Pancreas (tissue), 10 donors: ENCODE measurements at regions of chr10 and their contacts with region 1.

Region 1: GRCh38 chr10:122298598-122299301 is 27.7 kb downstream of the BTBD16 start:
- DNase-seq: peak in 5 of 6 donors; percentile 53 to 85 (median 74)
- ATAC-seq: peak; percentile 95 to 98 (median 98)
- H3K4me3 ChIP-seq: peak overlapping the region in 1 of 4 donors; percentile 13
- H3K27ac ChIP-seq: no peak overlapping the region
- H3K4me1 ChIP-seq: peaks cover 0 to 5% (median 0%) of the 10 kb centered on the region in 3 donors
- H3K27me3 ChIP-seq: no peaks in the 10 kb centered on the region
- CTCF ChIP-seq: peak; percentile 81 to 92 (median 84)

Region 2: DNA sequence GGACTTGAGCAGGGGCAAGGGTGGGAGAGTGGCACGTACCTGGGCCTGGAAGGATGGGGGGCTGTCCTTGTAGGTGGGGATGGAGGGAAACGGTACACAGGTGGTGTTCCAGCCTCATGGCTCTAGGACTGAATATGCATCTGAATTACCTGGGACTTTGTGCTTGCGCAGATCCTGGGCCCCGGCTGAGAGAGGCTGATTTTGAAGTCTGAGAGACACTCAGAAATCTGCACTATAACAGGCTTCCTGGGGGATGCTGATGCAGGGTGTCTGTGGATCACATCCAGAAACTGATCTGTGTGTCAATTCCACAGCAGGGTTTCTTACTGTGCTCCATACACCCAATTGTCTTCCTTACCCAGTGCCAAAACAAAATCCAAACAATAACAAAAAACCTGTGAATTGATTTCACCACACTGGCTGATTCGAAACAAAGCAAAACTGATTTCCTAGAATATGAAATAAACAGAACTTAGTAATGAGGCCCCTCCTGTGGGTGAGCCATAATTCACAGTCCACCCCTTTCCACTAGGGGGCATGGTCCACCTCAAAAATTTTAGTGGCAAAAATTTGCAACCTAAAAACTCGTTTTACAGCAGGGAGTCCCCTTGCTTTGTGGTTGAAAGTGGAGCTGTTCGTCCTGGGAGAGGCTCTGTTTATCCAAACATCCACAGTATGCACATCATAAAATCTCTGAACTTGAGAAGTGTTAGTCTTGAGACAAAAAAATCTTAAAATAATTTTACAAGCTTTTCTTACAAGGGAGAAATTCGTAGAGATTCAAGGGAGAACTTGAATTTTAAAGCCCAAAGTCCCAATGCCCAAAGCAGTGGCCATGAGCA is 43.8 kb after region 1 on chr10:
- intact Hi-C with region 1: no loop called
- DNase-seq: peak in 2 of 6 donors; percentile 16 to 53
- ATAC-seq: peak; percentile 58 to 83 (median 75)
- H3K4me3 ChIP-seq: no peak overlapping the region
- H3K27ac ChIP-seq: no peak overlapping the region
- H3K4me1 ChIP-seq: peaks cover 0 to 4% (median 0%) of the 10 kb centered on the region in 3 donors
- H3K27me3 ChIP-seq: no peaks in the 10 kb centered on the region
- CTCF ChIP-seq: peak; percentile 39 to 68 (median 57)

Region 3: GRCh38 chr10:122352817-122353525 is 54.2 kb after region 1 on chr10:
- intact Hi-C with region 1: no loop called
- DNase-seq: no peak
- ATAC-seq: no peak
- H3K4me3 ChIP-seq: no peak overlapping the region
- H3K27ac ChIP-seq: no peak overlapping the region
- H3K4me1 ChIP-seq: no peaks in the 10 kb centered on the region
- H3K27me3 ChIP-seq: no peaks in the 10 kb centered on the region
- CTCF ChIP-seq: no peak

Region 4: DNA sequence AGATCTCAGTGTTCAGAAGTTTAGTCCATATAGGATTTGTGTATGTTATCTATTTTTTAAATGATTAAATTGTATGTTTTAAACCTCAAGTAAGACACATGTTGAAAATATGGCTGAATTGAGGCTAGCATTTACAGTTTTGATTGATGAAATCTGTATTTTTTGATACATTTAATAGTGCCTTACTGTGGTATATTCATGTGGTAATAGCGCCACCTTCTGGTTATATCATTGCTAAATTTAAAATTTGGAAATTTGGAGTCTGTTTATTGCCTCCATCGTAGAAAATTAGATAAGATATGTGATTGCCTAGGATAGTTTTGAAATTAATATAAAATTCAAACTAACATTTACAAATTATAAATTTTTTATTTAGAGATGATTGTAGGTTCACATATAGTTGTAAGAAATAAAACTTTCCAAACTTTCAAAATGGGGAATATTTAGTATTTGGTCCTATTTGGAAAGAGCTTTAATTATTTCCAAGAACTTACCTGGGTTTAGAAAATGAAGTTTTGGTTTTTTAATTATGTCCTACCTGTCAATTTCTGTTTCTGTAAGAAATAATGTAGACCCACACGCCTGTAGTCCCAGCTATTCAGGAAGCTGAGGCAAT is 136.6 kb after region 1 on chr10:
- intact Hi-C with region 1: loop called in 2 of 3 experiments (anchors 2 to 5 kb)
- DNase-seq: no peak
- ATAC-seq: peak; percentile 40 to 71 (median 66)
- H3K4me3 ChIP-seq: no peak overlapping the region
- H3K27ac ChIP-seq: no peak overlapping the region
- H3K4me1 ChIP-seq: no peaks in the 10 kb centered on the region
- H3K27me3 ChIP-seq: no peaks in the 10 kb centered on the region
- CTCF ChIP-seq: peak; percentile 14 to 51 (median 45)

Region 5: GRCh38 chr10:122565728-122566206 is 267.0 kb after region 1 on chr10:
- intact Hi-C with region 1: loop called in 1 of 3 experiments (anchors 10 kb)
- DNase-seq: peak; percentile 56 to 92 (median 80)
- ATAC-seq: peak; percentile 76 to 92 (median 88)
- H3K4me3 ChIP-seq: peak overlapping the region in 2 of 4 donors; percentile 17 to 18
- H3K27ac ChIP-seq: no peak overlapping the region
- H3K4me1 ChIP-seq: no peaks in the 10 kb centered on the region
- H3K27me3 ChIP-seq: peaks cover 0 to 8% (median 0%) of the 10 kb centered on the region in 4 donors
- CTCF ChIP-seq: peak; percentile 52 to 69 (median 61)